Activated naive CD4-positive, alpha-beta T cell treated with anti-CD3 and anti-CD28 coated beads, Interleukin-2, amount 10 ng/mL, durations not matched to agents 7 days and 5 days (primary cell): ENCODE measurements at regions of chr6 and their contacts with region 1.

Region 1: DNA sequence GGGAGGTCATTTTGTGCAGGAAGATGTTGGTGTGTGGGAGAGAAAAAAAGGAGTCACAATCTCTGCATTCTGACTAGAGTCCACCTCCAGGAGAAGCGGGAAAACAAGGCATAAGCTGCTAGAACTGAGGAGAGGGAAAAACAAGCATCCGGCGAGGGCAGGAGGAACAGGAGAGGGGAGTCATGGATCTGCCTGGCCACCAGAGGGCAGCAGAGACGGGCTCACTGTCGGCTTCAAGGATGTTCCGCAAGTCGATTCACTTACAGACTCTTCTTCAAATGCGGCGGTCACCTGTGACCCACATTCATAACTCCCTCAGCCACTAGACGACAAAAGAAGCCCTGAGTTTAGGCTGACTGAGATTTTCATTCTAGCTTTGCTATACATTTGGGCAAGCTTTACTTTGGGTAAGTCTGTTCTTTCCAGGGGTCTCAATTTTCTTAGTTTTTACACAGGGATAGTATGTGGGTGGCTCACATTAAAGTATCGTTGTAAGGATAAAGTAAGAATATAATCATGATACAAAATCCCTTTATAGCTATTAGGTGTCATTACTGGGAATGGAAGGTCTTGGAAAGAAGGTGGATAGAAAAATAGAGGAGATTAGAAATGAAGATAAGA is 6.6 kb upstream of the BTNL2 start:
- DNase-seq: peak; percentile 90
- H3K4me3 Mint-ChIP-seq: no peak overlapping the region
- H3K27ac Mint-ChIP-seq: no peak overlapping the region
- H3K4me1 Mint-ChIP-seq: peaks cover 6% of the 10 kb centered on the region
- H3K27me3 Mint-ChIP-seq: peaks cover 61% of the 10 kb centered on the region

Region 2: DNA sequence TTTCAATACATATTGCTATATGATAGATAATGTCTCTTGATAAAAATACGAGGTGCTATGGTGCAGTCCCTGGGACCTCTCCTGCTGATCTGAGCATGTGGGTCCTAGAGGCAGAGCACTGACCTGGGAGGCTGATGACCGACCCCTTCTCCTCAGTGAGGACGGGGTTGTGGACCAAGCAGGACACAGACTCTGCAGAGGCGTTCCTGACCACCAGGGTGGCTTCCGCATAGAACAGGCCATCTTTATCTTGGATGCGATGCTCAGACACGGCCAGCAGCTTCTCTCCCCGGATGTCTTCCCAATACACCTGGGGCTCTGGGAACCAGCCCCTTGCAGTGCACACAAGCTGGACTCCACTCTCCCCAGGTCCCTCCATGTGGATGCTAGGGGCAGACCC is 10.7 kb before region 1 on chr6:
- CTCF ChIA-PET with region 1: interaction called, 21 read pairs
- DNase-seq: no peak
- H3K4me3 Mint-ChIP-seq: no peak overlapping the region
- H3K27ac Mint-ChIP-seq: no peak overlapping the region
- H3K4me1 Mint-ChIP-seq: no peaks in the 10 kb centered on the region
- H3K27me3 Mint-ChIP-seq: peaks cover 41% of the 10 kb centered on the region

Region 3: GRCh38 chr6:32432050-32432450 is 18.5 kb after region 1 on chr6:
- CTCF ChIA-PET with region 1: interaction called, 14 read pairs
- DNase-seq: no peak
- H3K4me3 Mint-ChIP-seq: no peak overlapping the region
- H3K27ac Mint-ChIP-seq: no peak overlapping the region
- H3K4me1 Mint-ChIP-seq: no peaks in the 10 kb centered on the region
- H3K27me3 Mint-ChIP-seq: peaks cover 20% of the 10 kb centered on the region

Region 4: GRCh38 chr6:32700391-32701040 is 287.0 kb after region 1 on chr6:
- CTCF ChIA-PET with region 1: interaction called, 40 read pairs
- DNase-seq: peak; percentile 43
- H3K4me3 Mint-ChIP-seq: no peak overlapping the region
- H3K27ac Mint-ChIP-seq: no peak overlapping the region
- H3K4me1 Mint-ChIP-seq: peaks cover 2% of the 10 kb centered on the region
- H3K27me3 Mint-ChIP-seq: peaks cover 44% of the 10 kb centered on the region

Region 5: DNA sequence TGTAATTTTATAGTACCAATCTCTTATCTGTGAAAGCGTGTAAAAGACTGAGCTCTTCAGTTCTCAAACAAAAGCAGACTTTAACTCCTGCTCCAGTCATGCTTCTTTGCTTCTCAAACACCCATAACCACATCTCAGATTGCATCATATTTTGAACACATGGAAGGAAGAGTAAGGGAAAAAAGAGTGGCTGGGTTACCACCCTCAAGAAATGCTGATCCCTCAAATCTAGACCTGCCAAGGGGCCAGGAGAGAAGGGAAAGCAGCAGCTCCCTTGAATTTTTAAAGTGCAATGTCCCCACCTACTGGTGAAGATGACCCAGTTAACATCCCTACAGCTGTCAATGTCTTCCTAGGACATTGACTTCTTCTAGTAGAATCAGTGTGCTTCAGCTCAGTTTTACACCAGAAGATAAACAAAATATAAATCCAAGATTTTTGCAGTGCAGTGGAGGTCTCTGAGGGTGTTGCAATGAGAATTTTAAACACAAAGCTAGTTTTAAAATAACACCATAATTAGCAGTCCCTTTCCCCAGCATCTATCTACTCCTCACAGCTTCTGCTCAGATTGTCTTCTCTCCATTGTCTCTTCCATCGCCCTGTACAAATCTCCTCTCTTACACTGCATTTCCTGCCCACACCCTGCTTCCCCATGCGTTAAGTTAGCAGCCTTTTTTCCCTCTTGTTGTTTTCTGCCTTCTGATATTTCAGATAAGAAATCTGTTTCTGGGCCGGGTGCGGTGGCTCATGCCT is 372.4 kb after region 1 on chr6:
- CTCF ChIA-PET with region 1: interaction called, 39 read pairs
- DNase-seq: peak; percentile 45
- H3K4me3 Mint-ChIP-seq: no peak overlapping the region
- H3K27ac Mint-ChIP-seq: no peak overlapping the region
- H3K4me1 Mint-ChIP-seq: no peaks in the 10 kb centered on the region
- H3K27me3 Mint-ChIP-seq: peaks cover 45% of the 10 kb centered on the region

Region 6: DNA sequence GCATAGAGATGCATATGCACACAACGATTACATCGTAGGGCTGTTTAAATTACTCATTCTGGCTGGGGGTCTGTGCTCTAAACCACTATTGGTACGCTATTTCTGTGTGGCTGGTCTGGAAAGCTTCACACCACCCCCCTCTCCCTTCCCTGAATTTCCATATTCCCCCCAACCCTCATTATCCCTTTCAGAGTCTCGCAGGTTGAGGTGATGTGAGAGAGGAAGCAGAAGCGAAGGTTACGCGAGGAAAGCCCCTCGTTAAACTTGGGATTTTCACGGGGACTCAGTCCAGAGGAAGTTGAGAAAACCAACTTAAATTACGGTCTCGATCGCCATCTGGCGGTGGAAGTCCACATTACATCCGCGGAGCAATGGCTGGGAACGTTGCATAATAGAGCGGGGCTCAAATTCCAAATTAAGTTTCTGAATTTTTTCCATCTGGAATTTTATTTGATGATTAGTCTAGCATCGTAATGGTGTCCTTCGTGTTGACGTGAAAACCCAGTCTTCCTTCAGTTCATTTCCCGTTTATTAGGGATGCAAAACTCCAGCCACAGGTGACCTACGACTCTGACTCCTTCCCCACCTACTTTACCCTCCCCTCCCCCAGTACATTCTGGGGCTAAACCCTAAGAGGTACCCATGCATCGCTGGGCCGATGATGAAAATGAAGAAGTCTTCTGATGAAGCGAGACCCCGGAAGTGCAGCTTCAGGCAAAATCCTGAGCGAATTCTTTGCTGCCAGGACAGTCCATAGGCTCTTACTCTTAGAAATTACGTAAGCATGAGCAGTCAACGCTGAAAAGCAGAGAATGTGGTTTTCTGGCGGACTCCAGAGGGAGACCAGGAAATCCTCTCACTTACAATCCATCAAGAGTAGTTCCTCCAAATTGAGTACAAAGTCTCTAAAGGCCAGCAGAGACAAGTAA is 383.6 kb after region 1 on chr6:
- CTCF ChIA-PET with region 1: interaction called, 16 read pairs
- DNase-seq: peak; percentile 83
- H3K4me3 Mint-ChIP-seq: peak overlapping the region; percentile 27
- H3K27ac Mint-ChIP-seq: no peak overlapping the region
- H3K4me1 Mint-ChIP-seq: peaks cover 33% of the 10 kb centered on the region
- H3K27me3 Mint-ChIP-seq: peaks cover 56% of the 10 kb centered on the region